ENCODE measurements at regions of chr6 and their contacts with region 1.

Region 1: DNA sequence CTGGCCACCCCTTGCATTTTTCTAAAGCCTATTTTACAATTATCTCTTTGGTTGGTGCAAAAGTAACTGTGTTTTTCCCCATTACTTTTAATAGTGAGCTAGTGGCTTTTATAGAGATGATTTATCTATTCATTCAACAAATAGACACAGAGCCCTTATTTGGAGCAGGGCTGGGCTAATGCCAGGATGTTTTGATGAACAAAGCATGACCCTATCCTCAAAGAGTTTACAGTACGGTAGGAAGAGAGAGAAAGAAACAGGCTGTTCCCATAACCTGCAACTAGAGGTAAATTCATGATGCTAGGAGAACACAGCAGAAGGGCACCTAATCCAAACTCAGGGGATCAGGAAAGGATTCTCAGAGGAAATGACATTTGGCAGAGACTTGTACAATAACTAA is 37.3 kb upstream of the UST start:
- DNase-seq: no peak
- ATAC-seq: no peak
- H3K4me3 ChIP-seq: no peak overlapping the region
- H3K27ac ChIP-seq: no peak overlapping the region
- H3K4me1 ChIP-seq: peaks cover 0 to 11% of the 10 kb centered on the region in 2 donors
- H3K27me3 ChIP-seq: no peaks in the 10 kb centered on the region

Region 2: DNA sequence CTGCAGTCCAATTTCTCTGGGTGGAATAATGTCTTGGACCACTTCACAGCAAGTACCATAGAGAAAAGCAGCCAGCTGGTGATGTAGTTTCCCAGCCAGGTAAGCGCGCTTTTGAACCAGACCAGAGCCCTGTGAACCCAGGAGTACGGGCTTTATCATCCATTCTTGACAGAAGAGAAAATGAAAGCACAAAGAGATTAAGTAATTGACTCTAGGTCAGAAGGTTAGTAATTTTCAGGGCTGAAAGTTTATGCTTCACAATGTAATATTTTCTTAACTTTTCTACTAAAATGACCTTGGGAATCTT is 30.2 kb after region 1 on chr6:
- intact Hi-C with region 1: loop called in 1 of 2 experiments (anchors 5 kb)
- DNase-seq: no peak
- ATAC-seq: no peak
- H3K4me3 ChIP-seq: no peak overlapping the region
- H3K27ac ChIP-seq: no peak overlapping the region
- H3K4me1 ChIP-seq: peaks cover 0 to 3% of the 10 kb centered on the region in 2 donors
- H3K27me3 ChIP-seq: no peaks in the 10 kb centered on the region